Posterior vena cava (tissue), 2 donors: ENCODE measurements at regions of chr2 and their contacts with region 1.

Region 1: DNA sequence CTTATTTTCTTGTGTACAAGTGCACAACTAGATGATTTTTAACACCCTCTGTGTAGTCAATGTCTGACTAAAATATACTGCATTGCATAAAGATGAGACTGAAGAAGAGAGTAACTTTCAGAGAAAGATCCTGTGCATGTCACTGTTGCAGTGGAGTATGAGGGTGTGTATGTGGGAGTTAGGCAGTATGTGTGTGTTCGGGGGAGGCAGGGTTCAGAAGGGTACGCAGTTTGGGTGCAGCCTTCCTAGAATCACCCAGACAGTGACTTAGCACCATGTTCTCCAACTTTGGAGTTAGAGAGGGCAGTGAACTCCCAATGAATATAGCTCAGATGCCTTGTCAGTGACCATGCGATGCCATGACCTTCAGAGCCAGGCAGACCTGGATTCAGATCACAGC is 84.6 kb downstream of the LRATD1 start:
- DNase-seq: no peak

Region 2: DNA sequence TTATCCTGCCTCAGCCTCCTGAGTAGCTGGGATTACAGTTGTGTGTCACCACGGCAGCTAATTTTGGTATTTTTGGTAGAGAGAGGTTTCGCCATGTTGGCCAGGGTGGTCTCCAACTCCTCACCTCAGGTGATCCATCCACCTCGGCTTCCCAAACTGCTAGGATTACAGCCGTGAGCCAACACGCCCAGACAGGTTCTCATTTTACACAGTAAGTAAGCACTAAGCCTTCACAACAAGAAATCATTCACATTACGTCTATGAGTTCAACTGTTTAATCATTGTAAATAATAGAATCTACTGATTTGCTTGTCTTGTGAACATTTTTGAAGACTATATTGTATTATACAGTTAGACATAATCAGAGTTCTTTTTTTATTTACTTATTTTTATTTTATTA is 216.1 kb before region 1 on chr2:
- intact Hi-C with region 1: no loop called
- DNase-seq: no peak

Region 3: GRCh38 chr2:14681608-14682007 is 35.5 kb before region 1 on chr2:
- intact Hi-C with region 1: loop called in 1 of 2 experiments (anchors 1 kb)
- DNase-seq: no peak

Region 4: DNA sequence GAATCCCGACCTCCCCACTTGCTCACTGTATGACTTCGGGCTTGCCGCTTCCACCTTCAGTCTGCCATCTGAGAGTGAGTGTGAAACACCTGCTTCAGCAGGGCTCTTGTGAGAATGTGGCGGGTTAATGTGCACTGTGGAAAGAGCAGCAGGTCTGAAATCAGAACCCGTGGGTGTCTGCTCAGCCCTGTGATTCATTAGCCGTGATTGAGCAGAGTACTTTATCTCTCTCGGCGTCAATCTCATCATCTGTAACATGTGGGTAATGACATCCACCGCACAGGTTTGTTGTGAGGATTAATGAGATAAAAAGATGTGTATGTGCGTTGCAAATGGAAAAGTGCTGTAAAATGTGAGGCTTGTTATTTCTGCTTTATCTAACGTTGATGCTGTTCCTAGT is 44.0 kb after region 1 on chr2:
- intact Hi-C with region 1: no loop called
- DNase-seq: no peak